Activated CD4-positive, alpha-beta memory T cell treated with anti-CD3 and anti-CD28 coated beads for 36 hours (primary cell): ENCODE measurements at regions of chr15 and their contacts with region 1.

Region 1: GRCh38 chr15:92625251-92625980 is 30.2 kb downstream of the FAM174B start:
- DNase-seq: peak; percentile 46
- H3K4me3 Mint-ChIP-seq: peak overlapping the region; percentile 3
- H3K27ac Mint-ChIP-seq: peak overlapping the region; percentile 93
- H3K4me1 Mint-ChIP-seq: peaks cover 39% of the 10 kb centered on the region
- H3K27me3 Mint-ChIP-seq: peaks cover 8% of the 10 kb centered on the region

Region 2: GRCh38 chr15:92097474-92098178 is 527.8 kb before region 1 on chr15:
- CTCF ChIA-PET with region 1: no interaction called
- POLR2A ChIA-PET with region 1: no interaction called
- intact Hi-C with region 1: loop called (anchors 10 kb)
- DNase-seq: peak; percentile 66
- H3K4me3 Mint-ChIP-seq: no peak overlapping the region
- H3K27ac Mint-ChIP-seq: peak overlapping the region; percentile 6
- H3K4me1 Mint-ChIP-seq: peaks cover 50% of the 10 kb centered on the region
- H3K27me3 Mint-ChIP-seq: no peaks in the 10 kb centered on the region

Region 3: DNA sequence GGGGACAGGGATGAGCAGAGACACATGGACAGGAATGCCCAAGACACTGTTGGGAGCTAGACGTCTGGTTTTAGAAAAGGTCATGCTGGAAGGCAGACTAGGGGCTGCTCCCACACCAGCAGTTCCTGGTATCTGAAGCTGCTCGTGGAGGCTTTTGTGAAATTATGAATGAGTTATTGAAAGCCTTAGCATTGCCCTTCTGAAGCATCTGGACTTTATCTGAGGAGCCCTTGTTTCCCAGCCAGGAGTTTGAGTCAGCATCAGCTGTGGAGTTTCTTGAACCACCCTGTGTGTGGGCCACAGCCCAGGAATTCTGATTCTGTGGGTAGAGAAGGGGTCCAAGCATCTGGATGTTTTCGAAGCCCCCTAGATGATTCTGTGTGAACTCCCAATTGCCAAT is 513.2 kb before region 1 on chr15:
- CTCF ChIA-PET with region 1: no interaction called
- POLR2A ChIA-PET with region 1: no interaction called
- intact Hi-C with region 1: no loop called
- DNase-seq: no peak
- H3K4me3 Mint-ChIP-seq: no peak overlapping the region
- H3K27ac Mint-ChIP-seq: no peak overlapping the region
- H3K4me1 Mint-ChIP-seq: peaks cover 4% of the 10 kb centered on the region
- H3K27me3 Mint-ChIP-seq: no peaks in the 10 kb centered on the region

Region 4: GRCh38 chr15:92606126-92606835 is 19.1 kb before region 1 on chr15:
- CTCF ChIA-PET with region 1: no interaction called
- POLR2A ChIA-PET with region 1: no interaction called
- intact Hi-C with region 1: no loop called
- DNase-seq: no peak
- H3K4me3 Mint-ChIP-seq: no peak overlapping the region
- H3K27ac Mint-ChIP-seq: no peak overlapping the region
- H3K4me1 Mint-ChIP-seq: no peaks in the 10 kb centered on the region
- H3K27me3 Mint-ChIP-seq: peaks cover 2% of the 10 kb centered on the region

Region 5: GRCh38 chr15:92636908-92637481 is 11.6 kb after region 1 on chr15:
- CTCF ChIA-PET with region 1: no interaction called
- POLR2A ChIA-PET with region 1: no interaction called
- intact Hi-C with region 1: no loop called
- DNase-seq: peak; percentile 24
- H3K4me3 Mint-ChIP-seq: no peak overlapping the region
- H3K27ac Mint-ChIP-seq: no peak overlapping the region
- H3K4me1 Mint-ChIP-seq: peaks cover 8% of the 10 kb centered on the region
- H3K27me3 Mint-ChIP-seq: peaks cover 24% of the 10 kb centered on the region

Region 6: GRCh38 chr15:92655178-92655995 is 30.0 kb after region 1 on chr15 and contains the start of gene FAM174B:
- CTCF ChIA-PET with region 1: no interaction called
- POLR2A ChIA-PET with region 1: no interaction called
- intact Hi-C with region 1: loop called (anchors 2 kb)
- DNase-seq: peak; percentile 58
- H3K4me3 Mint-ChIP-seq: peak within 1 kb of the TSS; percentile 71
- H3K27ac Mint-ChIP-seq: no peak within 1 kb of the TSS
- H3K4me1 Mint-ChIP-seq: peaks cover 14% of the 10 kb centered on the region
- H3K27me3 Mint-ChIP-seq: peaks cover 35% of the 10 kb centered on the region
- total RNA-seq, gene FAM174B: 5.0 to 7.7 TPM

Region 7: GRCh38 chr15:92714477-92715401 is 89.3 kb after region 1 on chr15:
- CTCF ChIA-PET with region 1: interaction called, 6 read pairs
- POLR2A ChIA-PET with region 1: no interaction called
- intact Hi-C with region 1: loop called (anchors 1 kb)
- DNase-seq: peak; percentile 82
- H3K4me3 Mint-ChIP-seq: peak overlapping the region; percentile 38
- H3K27ac Mint-ChIP-seq: no peak overlapping the region
- H3K4me1 Mint-ChIP-seq: peaks cover 6% of the 10 kb centered on the region
- H3K27me3 Mint-ChIP-seq: peaks cover 22% of the 10 kb centered on the region

Region 8: DNA sequence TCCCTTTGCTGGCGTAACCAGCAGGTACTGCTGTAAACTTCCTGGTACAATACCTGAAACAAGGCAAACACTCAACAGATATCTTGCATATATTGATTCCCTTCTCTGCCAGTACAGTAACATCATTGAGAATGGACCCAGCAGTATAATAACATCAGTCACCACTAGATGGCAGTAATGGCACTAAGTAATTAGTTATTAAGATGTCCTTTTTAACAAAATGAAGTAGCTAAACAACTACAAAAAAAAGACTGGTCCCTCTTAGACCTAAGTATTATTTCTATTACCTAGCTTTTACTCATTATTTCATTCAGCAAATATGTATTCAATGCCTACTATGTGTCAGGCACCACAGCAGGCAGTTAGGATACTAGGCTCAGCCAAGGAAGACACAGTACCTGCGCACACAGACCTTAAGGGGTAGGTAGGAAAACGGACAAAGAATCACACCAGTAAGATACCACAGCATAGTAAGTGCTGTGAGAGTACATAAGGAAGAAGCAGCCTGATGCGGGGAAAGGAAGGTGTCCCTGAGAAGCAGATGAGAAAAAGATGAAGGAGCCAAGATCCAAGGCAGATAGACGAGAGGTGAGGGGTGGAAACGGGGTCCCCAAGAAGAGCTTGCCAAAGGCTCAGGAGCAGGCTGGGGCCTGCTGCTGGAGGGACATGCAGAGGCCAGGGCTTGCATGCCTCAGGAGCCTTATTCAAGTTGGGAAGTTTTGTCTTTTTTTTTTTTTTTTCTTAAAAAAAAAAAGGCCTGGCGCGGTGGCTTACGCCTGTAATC is 171.9 kb after region 1 on chr15:
- CTCF ChIA-PET with region 1: no interaction called
- POLR2A ChIA-PET with region 1: no interaction called
- intact Hi-C with region 1: no loop called
- DNase-seq: no peak
- H3K4me3 Mint-ChIP-seq: no peak overlapping the region
- H3K27ac Mint-ChIP-seq: peak overlapping the region; percentile 69
- H3K4me1 Mint-ChIP-seq: peaks cover 9% of the 10 kb centered on the region
- H3K27me3 Mint-ChIP-seq: no peaks in the 10 kb centered on the region

Region 9: DNA sequence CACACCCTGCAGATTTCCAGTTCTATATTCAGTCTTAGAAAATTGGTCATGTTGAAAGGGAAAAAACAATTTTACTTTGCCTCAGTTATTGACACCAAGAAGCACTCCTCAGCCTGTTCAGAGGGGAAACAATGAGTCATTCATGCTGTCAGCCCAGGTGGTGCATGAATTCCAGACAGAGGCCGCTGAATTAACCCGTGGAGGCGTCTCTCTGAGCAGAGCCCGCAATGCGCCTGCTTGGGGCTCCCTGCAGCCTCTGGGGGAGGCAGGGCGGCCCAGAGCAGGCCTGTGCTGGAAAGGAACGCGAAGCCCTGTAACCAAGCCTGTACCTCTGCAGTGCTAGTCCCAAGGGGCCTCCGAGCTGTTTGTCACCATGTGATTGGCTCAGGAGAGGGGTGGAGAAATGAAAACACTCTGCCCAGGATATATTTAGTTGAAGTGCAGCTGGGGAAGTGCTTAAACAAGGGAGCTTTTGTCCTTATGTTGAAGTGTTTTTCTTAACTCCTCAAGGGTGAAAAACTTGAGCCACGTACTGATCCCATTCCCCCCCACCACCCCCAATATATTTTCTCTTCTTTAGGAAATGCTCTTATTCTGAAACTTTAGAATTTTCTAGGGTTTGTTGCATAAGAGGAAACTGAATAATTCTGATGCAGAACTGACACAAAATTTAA is 206.4 kb after region 1 on chr15:
- CTCF ChIA-PET with region 1: no interaction called
- POLR2A ChIA-PET with region 1: no interaction called
- intact Hi-C with region 1: loop called (anchors 1 kb)
- DNase-seq: peak; percentile 95
- H3K4me3 Mint-ChIP-seq: peak overlapping the region; percentile 70
- H3K27ac Mint-ChIP-seq: peak overlapping the region; percentile 99
- H3K4me1 Mint-ChIP-seq: peaks cover 52% of the 10 kb centered on the region
- H3K27me3 Mint-ChIP-seq: peaks cover 2% of the 10 kb centered on the region

Region 10: DNA sequence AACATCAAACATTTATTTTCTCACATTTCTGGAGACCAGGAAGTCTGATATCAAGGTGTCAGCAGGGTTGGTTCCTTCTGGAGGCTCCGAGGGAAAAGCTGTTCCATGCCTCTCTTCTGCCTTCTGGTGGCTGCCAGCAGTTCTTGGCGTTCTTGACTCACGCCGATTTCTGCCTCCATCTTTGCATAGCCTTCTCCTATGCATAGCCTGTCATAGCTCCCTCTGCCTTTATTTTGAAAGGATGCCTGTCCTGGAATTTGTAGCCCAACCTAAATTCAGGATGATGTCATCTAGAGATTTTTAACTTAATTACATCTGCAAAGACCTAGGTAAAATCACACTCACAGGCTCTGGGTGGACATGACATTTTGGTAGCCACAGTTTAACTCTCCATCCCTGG is 393.2 kb after region 1 on chr15:
- CTCF ChIA-PET with region 1: no interaction called
- POLR2A ChIA-PET with region 1: no interaction called
- intact Hi-C with region 1: loop called (anchors 5 kb)
- DNase-seq: no peak
- H3K4me3 Mint-ChIP-seq: no peak overlapping the region
- H3K27ac Mint-ChIP-seq: peak overlapping the region; percentile 83
- H3K4me1 Mint-ChIP-seq: peaks cover 68% of the 10 kb centered on the region
- H3K27me3 Mint-ChIP-seq: no peaks in the 10 kb centered on the region